A549 (cell line): ENCODE measurements at regions of chr12 and their contacts with region 1.

Region 1: GRCh38 chr12:2301531-2302461 is 249.0 kb downstream of the CACNA1C start:
- DNase-seq: no peak
- ATAC-seq: no peak
- H3K4me3 ChIP-seq: no peak overlapping the region
- H3K27ac ChIP-seq: no peak overlapping the region
- H3K4me1 ChIP-seq: no peaks in the 10 kb centered on the region
- CTCF ChIP-seq: no peak
- EP300 ChIP-seq: no peak
- POLR2A ChIP-seq: no peak
- RAD21 ChIP-seq: no peak

Region 2: DNA sequence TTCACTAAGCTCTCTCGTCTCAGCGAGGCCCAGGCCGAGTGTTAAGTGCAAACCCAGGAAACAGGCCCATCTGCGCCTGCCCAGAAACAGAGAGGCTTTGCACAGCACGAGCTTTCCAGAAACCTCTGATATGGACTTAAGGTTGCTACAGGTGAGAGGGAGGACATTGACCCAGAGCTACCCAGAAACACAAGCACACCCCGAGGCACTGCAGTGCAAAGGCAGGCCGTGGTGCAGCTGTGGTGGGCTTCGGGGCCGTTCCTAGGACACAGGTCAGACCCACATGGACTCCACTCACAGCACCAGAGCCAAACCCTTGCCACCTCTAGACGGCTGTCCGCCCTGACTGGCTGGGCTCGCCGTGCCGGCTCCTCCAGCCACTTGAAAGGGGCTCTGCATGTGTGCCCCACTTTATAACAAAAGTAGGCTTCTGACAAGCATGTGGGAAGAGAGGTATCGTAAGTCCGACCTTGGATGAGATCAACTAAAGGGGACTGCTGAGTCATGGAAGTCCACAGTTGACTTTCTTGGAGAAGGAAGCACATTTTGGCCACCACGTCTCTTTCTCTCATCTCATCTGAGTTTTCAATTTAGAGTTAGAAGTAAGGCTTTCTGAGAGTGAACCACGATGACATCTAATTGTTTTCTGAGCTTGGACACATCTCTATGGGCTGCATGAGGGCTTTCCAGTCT is 421.5 kb before region 1 on chr12:
- CTCF ChIA-PET with region 1: no interaction called
- POLR2A ChIA-PET with region 1: no interaction called
- DNase-seq: no peak
- ATAC-seq: no peak
- H3K4me3 ChIP-seq: no peak overlapping the region
- H3K27ac ChIP-seq: no peak overlapping the region
- H3K4me1 ChIP-seq: no peaks in the 10 kb centered on the region
- CTCF ChIP-seq: no peak
- EP300 ChIP-seq: no peak
- POLR2A ChIP-seq: no peak
- RAD21 ChIP-seq: no peak

Region 3: DNA sequence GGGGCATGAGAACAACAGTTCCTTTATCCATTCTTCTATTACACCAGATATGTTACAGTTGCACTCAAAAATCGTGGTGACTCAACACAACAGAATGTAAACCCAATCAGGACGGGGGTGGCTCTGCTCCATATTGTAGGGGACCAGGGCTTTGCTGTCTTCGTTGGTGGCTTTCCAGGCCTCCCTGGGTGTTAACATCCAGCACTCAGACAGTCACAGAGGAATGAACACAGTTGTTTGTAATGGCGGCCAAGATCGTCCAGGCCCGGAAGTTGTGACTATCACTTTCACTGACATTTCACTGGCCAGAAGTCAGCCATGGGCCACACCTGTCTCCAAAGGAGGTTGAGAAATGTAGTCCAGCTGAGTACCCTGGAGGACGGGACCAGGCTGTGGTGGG is 44.9 kb before region 1 on chr12:
- CTCF ChIA-PET with region 1: no interaction called
- POLR2A ChIA-PET with region 1: no interaction called
- DNase-seq: no peak
- ATAC-seq: no peak
- H3K4me3 ChIP-seq: no peak overlapping the region
- H3K27ac ChIP-seq: no peak overlapping the region
- H3K4me1 ChIP-seq: no peaks in the 10 kb centered on the region
- CTCF ChIP-seq: no peak
- EP300 ChIP-seq: no peak
- POLR2A ChIP-seq: no peak
- RAD21 ChIP-seq: no peak

Region 4: GRCh38 chr12:2277492-2278155 is 24.2 kb before region 1 on chr12:
- CTCF ChIA-PET with region 1: no interaction called
- POLR2A ChIA-PET with region 1: no interaction called
- DNase-seq: no peak
- ATAC-seq: no peak
- H3K4me3 ChIP-seq: no peak overlapping the region
- H3K27ac ChIP-seq: no peak overlapping the region
- H3K4me1 ChIP-seq: no peaks in the 10 kb centered on the region
- CTCF ChIP-seq: no peak
- EP300 ChIP-seq: no peak
- POLR2A ChIP-seq: no peak
- RAD21 ChIP-seq: no peak

Region 5: DNA sequence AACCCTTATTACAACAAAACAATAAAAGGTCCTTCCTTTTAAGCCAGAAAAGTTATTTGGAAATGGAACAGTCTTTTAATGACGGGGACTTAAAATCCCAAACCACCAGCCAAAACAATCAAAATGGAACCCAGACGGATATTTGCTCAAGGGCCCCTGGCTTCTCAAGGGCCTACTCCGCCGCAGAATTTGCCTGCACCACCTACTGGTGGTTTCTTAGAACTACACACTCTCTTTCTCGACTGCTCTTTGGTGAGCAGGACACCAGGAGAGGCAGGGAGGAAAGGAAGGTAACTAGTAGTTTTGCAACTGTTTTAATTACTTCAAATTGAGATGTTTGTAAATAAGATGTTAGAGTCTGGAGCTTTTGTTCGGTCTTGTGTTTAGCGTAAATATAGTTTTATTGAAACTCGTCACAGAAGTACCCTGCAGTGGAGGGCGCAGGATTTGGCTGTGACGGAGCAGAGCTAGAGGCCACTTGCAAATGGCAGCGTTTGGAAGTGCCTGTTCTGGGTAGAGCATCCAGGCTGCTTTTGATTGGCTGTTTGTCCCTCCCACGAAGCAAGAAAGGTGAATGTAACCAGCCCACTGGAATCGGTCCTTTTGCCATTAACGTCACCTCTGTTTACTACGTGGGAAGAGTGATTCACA is 10.5 kb before region 1 on chr12:
- CTCF ChIA-PET with region 1: interaction called, 19 read pairs
- POLR2A ChIA-PET with region 1: no interaction called
- DNase-seq: peak; percentile 60 to 80
- ATAC-seq: peak; percentile 70 to 90; a peak in 5 of 6 replicates
- H3K4me3 ChIP-seq: no peak overlapping the region
- H3K27ac ChIP-seq: no peak overlapping the region
- H3K4me1 ChIP-seq: no peaks in the 10 kb centered on the region
- CTCF ChIP-seq: peak; percentile 49
- EP300 ChIP-seq: no peak
- POLR2A ChIP-seq: no peak
- RAD21 ChIP-seq: peak; percentile 22 to 55; a peak in 2 of 5 replicates